Endothelial cell of umbilical vein (primary cell): ENCODE measurements at regions of chr1 and their contacts with region 1.

Region 1: GRCh38 chr1:2381741-2382620 is 9.4 kb downstream of the MORN1 start:
- DNase-seq: peak; percentile 65
- H3K4me3 ChIP-seq: no peak overlapping the region
- H3K27ac ChIP-seq: no peak overlapping the region
- H3K4me1 ChIP-seq: no peaks in the 10 kb centered on the region
- H3K27me3 ChIP-seq: no peaks in the 10 kb centered on the region
- CTCF ChIP-seq: peak; percentile 95 to 97
- POLR2A ChIP-seq: no peak

Region 2: GRCh38 chr1:2133039-2133878 is 248.7 kb before region 1 on chr1:
- CTCF ChIA-PET with region 1: interaction called, 12 read pairs
- POLR2A ChIA-PET with region 1: no interaction called
- dilution Hi-C with region 1: no loop called
- intact Hi-C with region 1: no loop called
- DNase-seq: peak; percentile 96
- H3K4me3 ChIP-seq: peak overlapping the region in 2 of 3 experiments; percentile 30 to 39
- H3K27ac ChIP-seq: peak overlapping the region; percentile 31
- H3K4me1 ChIP-seq: peaks cover 4% of the 10 kb centered on the region
- H3K27me3 ChIP-seq: no peaks in the 10 kb centered on the region
- CTCF ChIP-seq: no peak
- POLR2A ChIP-seq: no peak

Region 3: GRCh38 chr1:2189459-2190425 is 192.2 kb before region 1 on chr1:
- CTCF ChIA-PET with region 1: interaction called, 631 read pairs
- POLR2A ChIA-PET with region 1: interaction called, 15 read pairs
- dilution Hi-C with region 1: loop called (anchors 10 kb)
- intact Hi-C with region 1: no loop called
- DNase-seq: peak; percentile 96
- H3K4me3 ChIP-seq: peak overlapping the region; percentile 39 to 54 (median 39)
- H3K27ac ChIP-seq: peak overlapping the region; percentile 78
- H3K4me1 ChIP-seq: peaks cover 18% of the 10 kb centered on the region
- H3K27me3 ChIP-seq: no peaks in the 10 kb centered on the region
- CTCF ChIP-seq: no peak
- POLR2A ChIP-seq: peak; percentile 78

Region 4: GRCh38 chr1:2212542-2213491 is 169.2 kb before region 1 on chr1:
- CTCF ChIA-PET with region 1: interaction called, 24 read pairs
- POLR2A ChIA-PET with region 1: no interaction called
- dilution Hi-C with region 1: no loop called
- intact Hi-C with region 1: no loop called
- DNase-seq: peak; percentile 97
- H3K4me3 ChIP-seq: peak overlapping the region in 2 of 3 experiments; percentile 2 to 27
- H3K27ac ChIP-seq: peak overlapping the region; percentile 98
- H3K4me1 ChIP-seq: peaks cover 37% of the 10 kb centered on the region
- H3K27me3 ChIP-seq: no peaks in the 10 kb centered on the region
- CTCF ChIP-seq: peak; percentile 21 to 25
- POLR2A ChIP-seq: peak; percentile 71

Region 5: GRCh38 chr1:2233997-2234761 is 147.8 kb before region 1 on chr1:
- CTCF ChIA-PET with region 1: interaction called, 34 read pairs
- POLR2A ChIA-PET with region 1: interaction called, 5 read pairs
- dilution Hi-C with region 1: no loop called
- intact Hi-C with region 1: loop called (anchors 1 kb)
- DNase-seq: peak; percentile 47
- H3K4me3 ChIP-seq: peak overlapping the region in 2 of 3 experiments; percentile 0 to 10
- H3K27ac ChIP-seq: peak overlapping the region; percentile 46
- H3K4me1 ChIP-seq: peaks cover 40% of the 10 kb centered on the region
- H3K27me3 ChIP-seq: no peaks in the 10 kb centered on the region
- CTCF ChIP-seq: peak in 1 of 2 donors; percentile 9
- POLR2A ChIP-seq: no peak

Region 6: DNA sequence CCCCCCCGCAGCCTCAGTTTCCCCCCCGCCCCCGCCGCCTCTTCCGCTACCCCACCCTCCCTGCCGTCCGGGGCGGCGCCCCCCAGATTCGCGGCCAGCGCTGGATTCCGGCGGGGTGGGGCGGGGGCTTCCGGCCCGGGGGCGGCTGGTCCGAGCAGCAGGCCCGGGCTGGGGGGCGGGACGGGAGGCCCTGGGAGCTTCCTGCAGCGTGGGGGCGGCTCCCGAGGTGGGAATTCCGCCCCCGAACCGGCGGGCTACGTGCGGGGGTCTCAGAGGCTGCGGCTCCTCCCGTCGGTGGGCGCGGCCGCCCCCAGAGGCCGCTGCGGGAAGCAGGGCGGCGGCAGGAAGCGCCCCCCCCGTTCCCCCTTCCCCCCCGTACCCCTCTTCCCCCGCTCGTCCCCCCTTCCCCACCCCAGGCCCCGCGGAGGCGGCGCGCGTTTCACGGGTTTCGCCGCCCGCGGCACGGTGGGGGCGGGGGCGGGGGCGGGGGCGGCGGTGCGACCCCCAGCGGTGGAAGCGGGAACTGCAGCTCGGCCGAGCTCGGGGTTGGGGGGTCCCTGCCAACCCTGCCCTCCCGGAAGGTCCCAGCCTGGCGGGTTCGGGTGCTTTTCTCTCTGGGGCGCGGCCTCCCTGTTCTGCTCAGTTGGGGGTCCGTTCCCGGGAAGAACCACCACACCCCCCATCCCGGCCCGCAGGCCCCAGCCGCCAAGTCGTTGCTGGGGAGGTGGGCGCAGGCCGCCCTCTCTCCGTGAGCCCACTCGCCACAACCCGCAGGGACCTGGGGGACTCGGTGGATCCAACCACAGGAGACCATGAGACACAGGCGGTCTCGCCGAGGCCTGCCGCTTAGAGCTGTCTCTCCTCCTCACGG is 66.9 kb before region 1 on chr1:
- CTCF ChIA-PET with region 1: interaction called, 33 read pairs
- POLR2A ChIA-PET with region 1: interaction called, 3 read pairs
- dilution Hi-C with region 1: no loop called
- intact Hi-C with region 1: loop called (anchors 5 kb)
- DNase-seq: peak; percentile 29
- H3K4me3 ChIP-seq: peak overlapping the region in 1 of 3 experiments; percentile 54
- H3K27ac ChIP-seq: no peak overlapping the region
- H3K4me1 ChIP-seq: peaks cover 7% of the 10 kb centered on the region
- H3K27me3 ChIP-seq: no peaks in the 10 kb centered on the region
- CTCF ChIP-seq: peak; percentile 44 to 72
- POLR2A ChIP-seq: no peak

Region 7: DNA sequence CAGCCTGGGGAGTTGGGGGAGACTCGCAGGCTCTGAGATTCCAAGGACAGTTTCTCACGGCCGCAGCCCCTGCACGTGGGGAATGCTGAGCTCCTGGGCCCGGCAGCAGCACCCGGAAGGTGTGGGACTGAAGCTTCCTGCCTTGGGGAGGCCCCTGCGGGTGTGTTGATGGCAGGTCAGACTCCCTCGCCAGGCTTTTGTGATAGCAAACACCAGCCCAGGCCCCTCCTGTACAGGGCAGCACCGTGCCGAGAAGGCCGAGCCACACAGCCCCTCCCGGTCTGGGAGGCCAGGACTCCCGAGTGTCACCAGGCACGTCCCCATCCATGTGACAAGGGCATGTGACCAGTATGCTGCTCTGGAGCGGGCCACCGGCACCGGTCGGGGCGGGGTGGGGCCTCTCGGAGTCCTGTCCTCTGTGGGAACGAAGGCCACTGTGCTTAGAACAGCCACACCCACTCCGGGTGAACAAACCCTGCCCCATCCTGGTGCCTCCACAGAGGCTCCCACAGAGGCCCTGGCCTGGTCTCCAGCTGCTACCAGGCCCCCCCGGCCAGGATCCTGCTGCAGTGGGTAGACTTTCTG is 1041.4 kb after region 1 on chr1:
- CTCF ChIA-PET with region 1: interaction called, 10 read pairs
- POLR2A ChIA-PET with region 1: no interaction called
- dilution Hi-C with region 1: no loop called
- intact Hi-C with region 1: no loop called
- DNase-seq: no peak
- H3K4me3 ChIP-seq: no peak overlapping the region
- H3K27ac ChIP-seq: no peak overlapping the region
- H3K4me1 ChIP-seq: no peaks in the 10 kb centered on the region
- H3K27me3 ChIP-seq: no peaks in the 10 kb centered on the region
- CTCF ChIP-seq: no peak
- POLR2A ChIP-seq: no peak